Psoas muscle (tissue), 8 donors: ENCODE measurements at regions of chr9 and their contacts with region 1.

Region 1: DNA sequence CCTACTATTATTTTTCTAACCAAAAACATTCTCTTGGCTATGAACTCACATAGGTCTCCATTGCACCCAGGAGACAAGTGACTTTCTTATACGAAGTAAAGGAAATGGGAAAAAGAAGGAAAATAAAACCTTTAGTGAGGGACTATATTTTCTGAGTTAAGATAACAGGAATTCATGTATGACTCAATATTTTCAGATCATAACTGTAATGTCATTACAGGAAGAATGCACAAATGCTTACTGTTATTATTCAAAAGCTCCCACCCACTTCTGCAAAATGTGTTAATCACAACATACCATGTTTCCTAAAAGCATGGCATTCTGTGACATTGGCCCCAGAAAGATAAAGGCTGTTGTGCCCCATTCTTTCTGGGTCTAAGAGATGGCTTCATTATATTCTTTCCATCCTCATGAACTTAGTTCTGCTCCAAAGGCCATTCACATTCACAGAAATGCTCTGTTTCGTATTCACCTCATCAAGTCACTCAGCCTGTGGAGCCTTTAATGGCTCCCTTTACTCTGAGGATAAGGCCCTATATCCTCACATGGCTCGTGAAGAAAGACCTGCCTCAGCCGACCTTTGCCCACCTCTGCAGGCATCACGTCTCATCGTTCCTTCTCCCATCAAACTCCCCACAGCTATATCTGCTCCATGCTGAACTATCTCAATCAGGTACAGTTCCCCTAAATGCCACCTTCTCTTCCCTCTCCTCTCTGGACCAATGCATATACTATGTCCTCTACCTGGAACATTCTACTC is 77.0 kb downstream of the ABCA1 start:
- DNase-seq: no peak
- ATAC-seq: peak in 1 of 4 donors; percentile 11
- H3K4me3 ChIP-seq: no peak overlapping the region
- H3K27ac ChIP-seq: peak overlapping the region; percentile 42
- H3K4me1 ChIP-seq: peaks cover 21% of the 10 kb centered on the region
- H3K27me3 ChIP-seq: no peaks in the 10 kb centered on the region
- CTCF ChIP-seq: no peak

Region 2: DNA sequence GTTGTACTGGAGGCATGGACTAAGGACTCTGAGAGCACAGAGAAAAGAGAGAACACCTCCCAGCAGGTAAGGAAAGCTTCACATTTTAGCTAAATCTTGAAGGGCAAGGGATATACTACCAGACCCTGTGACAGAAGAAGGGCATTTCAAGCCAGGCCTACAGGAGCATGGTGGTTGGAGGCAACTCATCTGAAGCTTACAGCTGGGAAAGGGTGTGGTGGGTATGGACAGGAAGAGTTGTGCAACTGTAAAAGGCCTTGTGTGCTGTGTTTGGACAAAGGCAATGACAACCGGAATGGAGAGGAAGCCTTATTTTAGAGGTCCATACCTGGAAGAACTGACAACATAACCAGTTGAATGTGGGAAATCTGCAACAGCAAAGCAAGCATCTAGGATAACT is 55.9 kb before region 1 on chr9:
- intact Hi-C with region 1: no loop called
- DNase-seq: no peak
- ATAC-seq: peak in 2 of 4 donors; percentile 26 to 56
- H3K4me3 ChIP-seq: no peak overlapping the region
- H3K27ac ChIP-seq: peak overlapping the region; percentile 21
- H3K4me1 ChIP-seq: no peaks in the 10 kb centered on the region
- H3K27me3 ChIP-seq: no peaks in the 10 kb centered on the region
- CTCF ChIP-seq: no peak

Region 3: DNA sequence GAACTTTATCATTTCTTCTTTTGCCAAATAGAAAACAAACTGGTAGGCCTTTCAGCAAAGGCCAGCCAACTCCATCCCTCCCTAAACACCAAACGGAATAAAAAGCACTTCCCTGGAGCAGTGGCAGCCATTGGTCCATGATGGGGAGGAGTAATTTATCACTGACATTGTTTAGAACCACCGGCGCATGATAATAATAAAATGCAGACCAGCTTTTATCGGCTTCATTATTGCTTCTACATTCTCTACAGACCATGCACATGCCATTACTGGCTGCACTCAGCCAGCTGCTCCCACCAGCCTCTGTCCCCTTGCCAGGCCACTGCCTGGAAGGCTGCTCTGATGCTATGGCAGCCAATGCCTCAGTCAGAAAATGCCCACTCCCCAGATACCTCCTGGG is 31.1 kb after region 1 on chr9:
- intact Hi-C with region 1: loop called in 1 of 2 experiments (anchors 2 kb)
- DNase-seq: no peak
- ATAC-seq: no peak
- H3K4me3 ChIP-seq: no peak overlapping the region
- H3K27ac ChIP-seq: no peak overlapping the region
- H3K4me1 ChIP-seq: peaks cover 30% of the 10 kb centered on the region
- H3K27me3 ChIP-seq: no peaks in the 10 kb centered on the region
- CTCF ChIP-seq: no peak